Psoas muscle (tissue), 8 donors: ENCODE measurements at regions of chr18 and their contacts with region 1.

Region 1: DNA sequence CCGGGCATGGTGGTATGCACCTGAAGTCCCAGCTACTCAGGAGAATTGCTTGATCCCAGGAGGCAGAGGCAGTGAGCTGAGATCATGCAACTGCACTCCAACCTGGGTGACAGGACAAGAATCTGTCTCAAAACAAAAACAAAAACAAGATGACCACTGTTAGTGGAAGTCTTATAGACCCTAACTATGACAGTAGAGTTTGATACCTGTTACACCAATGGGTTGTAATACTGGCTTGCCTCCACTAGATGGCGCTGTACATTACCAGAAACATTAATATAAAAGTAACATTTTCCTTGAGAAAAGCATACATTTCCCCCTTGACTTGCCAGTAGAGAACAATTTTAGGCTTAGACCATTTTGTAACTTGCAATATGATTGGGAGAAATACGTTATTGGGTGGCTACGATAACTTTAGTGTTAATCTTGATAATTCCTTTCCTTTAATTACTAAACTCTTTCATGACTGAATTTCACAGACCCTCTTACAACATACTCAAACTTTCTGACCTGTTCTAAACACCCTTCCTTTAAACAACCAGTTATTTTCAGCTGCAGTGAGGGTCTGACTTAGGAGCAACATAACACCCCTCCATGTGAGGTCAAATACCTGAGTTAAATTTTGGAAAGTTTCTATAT is 19.5 kb downstream of the SLC25A52 start:
- DNase-seq: no peak
- ATAC-seq: peak in 3 of 4 donors; percentile 36 to 56 (median 43)
- H3K4me3 ChIP-seq: no peak overlapping the region
- H3K27ac ChIP-seq: no peak overlapping the region
- H3K4me1 ChIP-seq: peaks cover 9% of the 10 kb centered on the region
- H3K27me3 ChIP-seq: no peaks in the 10 kb centered on the region
- CTCF ChIP-seq: peak; percentile 94

Region 2: DNA sequence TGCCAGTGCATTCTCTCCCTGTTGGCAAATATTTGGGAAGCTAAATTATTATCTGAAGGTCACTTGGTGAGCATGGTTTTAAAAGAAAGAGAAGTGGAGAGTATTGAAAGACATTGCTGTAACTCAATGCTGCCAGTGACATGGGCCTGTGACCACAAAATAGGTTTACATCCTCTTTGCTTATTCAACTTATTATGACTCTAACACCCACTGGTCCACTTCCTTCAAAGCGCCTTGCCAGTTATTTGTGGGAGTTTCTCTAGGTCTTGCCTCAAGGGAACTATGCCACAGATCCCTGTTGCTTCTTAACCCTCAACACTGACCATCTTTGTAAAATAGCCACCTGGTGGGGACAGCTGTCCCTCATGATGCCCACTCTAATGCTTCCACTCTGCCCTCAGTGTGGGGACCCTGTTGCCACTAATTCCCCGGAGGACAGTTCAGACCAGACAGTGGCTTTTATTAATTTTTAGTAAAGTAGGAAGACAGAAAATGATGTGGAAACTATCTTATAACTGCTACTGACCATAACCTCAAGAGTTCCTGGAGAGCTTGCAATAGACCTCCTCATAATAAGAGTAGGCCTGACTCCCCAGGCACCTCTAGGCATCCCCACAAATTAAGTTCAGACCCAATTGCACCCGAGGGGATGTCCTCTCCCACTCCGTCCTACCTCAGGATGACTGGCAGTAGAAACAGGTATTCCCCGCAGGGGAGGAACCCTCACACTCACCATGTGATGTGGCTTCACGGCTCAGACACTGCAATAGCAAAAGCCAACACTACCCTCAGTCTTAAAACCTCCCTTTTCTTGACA is 50.8 kb after region 1 on chr18:
- intact Hi-C with region 1: no loop called
- DNase-seq: no peak
- ATAC-seq: no peak
- H3K4me3 ChIP-seq: no peak overlapping the region
- H3K27ac ChIP-seq: no peak overlapping the region
- H3K4me1 ChIP-seq: no peaks in the 10 kb centered on the region
- H3K27me3 ChIP-seq: no peaks in the 10 kb centered on the region
- CTCF ChIP-seq: no peak

Region 3: DNA sequence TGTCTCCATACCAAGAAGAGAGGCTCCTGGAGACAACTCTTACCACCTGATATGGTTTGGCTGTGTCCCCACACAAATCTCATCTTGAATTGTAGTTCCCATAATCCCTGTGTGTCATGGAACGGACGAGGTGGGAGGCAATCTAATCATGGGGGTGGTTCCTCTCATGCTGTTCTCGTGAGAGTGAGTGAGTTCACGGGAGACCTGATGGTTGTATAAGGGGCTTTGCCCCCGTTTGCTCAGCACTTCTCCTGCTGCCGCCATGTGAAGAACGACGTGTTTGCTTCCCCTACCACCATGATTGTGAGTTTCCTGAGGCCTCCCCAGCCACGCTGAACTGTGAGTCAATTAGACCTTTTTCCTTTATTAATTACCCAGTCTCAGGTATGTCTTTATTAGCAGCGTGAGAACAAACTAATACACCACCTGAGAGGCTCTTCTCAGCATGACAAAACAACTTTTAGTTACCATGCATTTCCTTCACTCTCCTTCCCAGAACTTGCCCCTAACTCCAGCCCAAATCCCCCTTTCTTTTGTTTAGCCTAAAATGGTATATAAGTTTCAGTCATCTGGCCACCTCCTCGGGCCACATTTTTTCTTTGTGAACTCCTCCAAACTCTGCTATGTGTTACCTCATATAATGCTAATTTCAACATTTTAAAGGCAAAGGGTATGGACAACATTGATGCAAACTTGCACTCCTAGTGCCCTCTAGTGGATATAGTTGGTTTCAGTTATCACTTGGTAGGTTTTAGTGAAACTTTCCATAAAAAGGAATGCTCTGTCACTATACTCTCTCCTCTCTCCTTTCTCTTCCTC is 78.1 kb after region 1 on chr18:
- intact Hi-C with region 1: loop called (anchors 2 to 5 kb)
- DNase-seq: no peak
- ATAC-seq: peak in 3 of 4 donors; percentile 44 to 85 (median 63)
- H3K4me3 ChIP-seq: no peak overlapping the region
- H3K27ac ChIP-seq: no peak overlapping the region
- H3K4me1 ChIP-seq: no peaks in the 10 kb centered on the region
- H3K27me3 ChIP-seq: no peaks in the 10 kb centered on the region
- CTCF ChIP-seq: peak; percentile 76

Region 4: DNA sequence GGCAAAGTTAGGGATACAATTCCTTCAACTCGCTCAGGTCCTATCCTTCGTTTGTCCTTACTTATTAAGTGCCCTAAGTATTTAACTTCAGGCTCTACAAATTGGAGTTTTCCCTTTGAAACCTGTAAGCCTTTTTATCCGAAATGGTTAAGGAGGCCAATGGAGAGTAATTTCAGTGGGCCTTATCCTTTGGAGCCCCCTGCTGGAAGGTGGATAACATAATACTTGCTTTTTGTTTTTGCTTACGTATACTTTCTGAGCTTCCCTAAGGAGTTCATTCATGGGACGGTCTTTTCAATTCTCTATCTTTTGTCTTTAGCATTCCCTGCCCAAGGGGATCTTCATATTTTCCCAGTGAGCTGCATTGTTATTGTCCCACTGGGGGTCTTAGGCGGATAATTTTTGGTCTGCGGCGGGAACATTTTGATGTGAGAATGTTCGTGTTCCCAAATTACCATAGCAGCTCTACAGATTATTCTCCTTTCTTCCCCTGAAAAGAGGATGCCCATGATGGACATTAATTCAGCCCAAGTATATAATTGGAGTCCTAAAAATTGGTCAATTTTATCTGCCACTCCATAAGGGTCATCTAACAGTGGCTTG is 236.2 kb after region 1 on chr18:
- intact Hi-C with region 1: loop called in 1 of 2 experiments (anchors 5 kb)
- DNase-seq: no peak
- ATAC-seq: peak in 3 of 4 donors; percentile 71 to 93 (median 77)
- H3K4me3 ChIP-seq: no peak overlapping the region
- H3K27ac ChIP-seq: no peak overlapping the region
- H3K4me1 ChIP-seq: no peaks in the 10 kb centered on the region
- H3K27me3 ChIP-seq: no peaks in the 10 kb centered on the region
- CTCF ChIP-seq: peak; percentile 73